ENCODE measurements at regions of chr20 and their contacts with region 1.

Region 1: DNA sequence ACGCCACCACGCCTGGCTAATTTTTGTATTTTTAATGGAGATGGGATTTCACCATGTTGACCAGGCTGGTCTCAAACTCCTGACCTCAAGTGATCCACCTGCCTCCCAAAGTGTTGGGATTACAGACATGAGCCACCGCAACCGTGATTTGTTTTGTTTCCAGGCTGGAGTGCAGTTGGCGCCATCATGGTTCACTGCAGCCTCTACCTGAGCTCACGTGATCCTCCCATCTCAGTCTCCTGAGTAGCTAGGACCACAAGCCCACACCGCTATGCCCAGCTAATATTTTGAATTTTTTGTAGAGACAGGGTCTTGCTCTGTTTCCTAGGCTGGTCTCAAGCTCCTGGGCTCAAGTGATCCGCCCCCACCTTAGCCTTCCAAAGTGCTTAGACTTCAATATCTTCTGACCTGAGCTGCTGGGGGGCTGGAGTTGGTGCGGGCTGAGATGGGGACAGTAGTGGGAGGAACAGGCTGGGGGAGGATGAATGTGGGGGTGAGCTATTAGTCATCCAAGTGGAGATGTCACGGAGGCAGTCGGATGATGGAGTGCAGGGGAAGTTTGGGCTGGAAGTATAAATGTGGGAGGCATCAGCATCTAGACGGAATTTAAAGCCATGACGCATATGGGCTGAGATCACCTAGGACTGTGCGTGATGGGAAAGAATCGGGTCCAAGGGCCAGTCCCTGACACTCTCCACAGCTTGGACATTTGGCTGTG is 23.1 kb upstream of the ZMYND8 start:
- DNase-seq: peak; percentile 58
- H3K4me3 ChIP-seq: no peak overlapping the region
- CTCF ChIP-seq: no peak

Region 2: DNA sequence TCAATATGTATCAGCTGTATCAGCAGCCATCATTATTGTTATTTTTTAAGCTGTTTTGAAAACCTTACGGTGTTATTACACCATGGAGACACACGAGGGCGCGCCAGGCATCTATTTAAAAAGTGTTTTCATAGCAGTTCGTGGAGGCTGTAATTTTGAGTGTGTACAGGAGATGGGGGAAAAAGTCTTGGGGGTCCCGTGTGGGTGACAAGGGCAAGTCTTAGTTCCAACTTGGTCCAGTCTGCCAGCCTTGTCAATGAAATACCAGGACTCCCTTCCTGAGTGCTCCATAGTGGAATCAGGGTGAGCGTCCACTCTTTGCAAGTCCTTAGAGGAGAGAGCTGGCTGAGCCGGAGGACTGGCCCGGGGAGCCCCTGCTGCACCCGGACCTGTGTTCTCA is 626.9 kb before region 1 on chr20:
- CTCF ChIA-PET with region 1: interaction called, 20 read pairs
- POLR2A ChIA-PET with region 1: no interaction called
- DNase-seq: no peak
- H3K4me3 ChIP-seq: peak overlapping the region; percentile 37
- CTCF ChIP-seq: peak; percentile 61

Region 3: DNA sequence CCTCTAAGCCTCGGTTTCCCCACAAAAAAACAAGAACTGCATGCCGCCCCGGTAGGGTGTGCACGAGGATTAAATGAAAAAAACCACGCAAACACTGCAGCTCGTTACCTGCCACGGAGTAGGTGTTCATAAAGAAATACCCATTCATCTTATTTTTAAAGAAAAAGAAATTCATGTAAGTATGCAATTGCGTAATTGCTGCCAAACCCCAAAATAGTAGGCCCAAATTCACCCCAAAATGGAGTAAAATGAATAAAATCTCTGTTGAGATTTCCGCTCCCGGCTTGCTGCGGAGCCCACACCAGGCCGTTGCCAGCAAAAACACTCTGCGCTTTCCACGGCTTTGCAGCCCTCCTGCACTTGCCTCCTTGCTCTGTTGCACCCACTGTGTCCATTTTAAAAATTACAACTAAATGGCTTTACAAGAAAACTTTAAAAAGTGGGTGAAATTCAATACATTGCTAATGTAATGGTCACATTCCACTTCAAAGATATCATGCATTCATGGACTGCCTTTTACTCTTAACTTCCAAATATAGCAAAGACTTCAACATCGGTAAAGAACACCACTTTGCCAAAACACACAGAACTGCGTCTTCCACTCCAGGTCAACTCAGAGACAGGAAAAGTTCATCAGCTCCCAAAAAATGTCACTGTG is 148.1 kb before region 1 on chr20:
- CTCF ChIA-PET with region 1: interaction called, 49 read pairs
- POLR2A ChIA-PET with region 1: no interaction called
- DNase-seq: peak; percentile 83
- H3K4me3 ChIP-seq: no peak overlapping the region
- CTCF ChIP-seq: peak; percentile 28

Region 4: GRCh38 chr20:47272893-47273590 is 106.5 kb before region 1 on chr20:
- CTCF ChIA-PET with region 1: interaction called, 633 read pairs
- POLR2A ChIA-PET with region 1: interaction called, 48 read pairs
- DNase-seq: no peak
- H3K4me3 ChIP-seq: no peak overlapping the region
- CTCF ChIP-seq: peak; percentile 78

Region 5: DNA sequence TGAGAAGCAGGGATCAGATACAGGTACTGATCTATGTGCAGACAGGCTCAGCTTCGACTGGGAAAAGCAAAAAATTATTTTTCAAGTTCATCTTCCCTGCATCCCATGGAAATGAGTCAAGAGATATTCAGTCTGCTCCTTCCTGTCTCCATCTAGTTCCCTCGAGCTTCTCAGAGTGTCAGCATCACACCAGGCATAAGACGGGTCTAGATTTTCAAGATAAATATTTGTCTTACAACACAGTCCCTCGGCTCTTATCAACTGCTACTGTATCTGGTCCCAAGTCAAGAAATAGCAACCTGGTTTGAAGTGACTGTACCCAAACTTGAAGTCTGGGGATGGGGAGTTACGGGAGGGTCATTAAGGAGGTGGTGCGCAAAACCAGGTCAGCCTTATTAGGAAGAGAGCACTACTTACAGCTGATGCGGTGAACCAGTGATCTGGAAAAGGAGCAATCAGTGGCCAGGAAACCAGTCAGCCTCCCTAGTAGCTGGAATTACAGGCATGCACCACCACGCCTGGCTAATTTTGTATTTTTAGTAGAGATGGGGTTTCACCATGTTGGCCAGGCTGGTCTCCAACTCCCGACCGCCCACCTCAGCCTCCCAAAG is 52.8 kb before region 1 on chr20:
- CTCF ChIA-PET with region 1: interaction called, 18 read pairs
- POLR2A ChIA-PET with region 1: no interaction called
- DNase-seq: no peak
- H3K4me3 ChIP-seq: no peak overlapping the region
- CTCF ChIP-seq: no peak

Region 6: GRCh38 chr20:47397652-47398301 is 18.2 kb after region 1 on chr20:
- CTCF ChIA-PET with region 1: interaction called, 19 read pairs
- POLR2A ChIA-PET with region 1: no interaction called
- DNase-seq: no peak
- H3K4me3 ChIP-seq: no peak overlapping the region
- CTCF ChIP-seq: no peak

Region 7: GRCh38 chr20:47445291-47445690 is 65.7 kb after region 1 on chr20:
- CTCF ChIA-PET with region 1: no interaction called
- POLR2A ChIA-PET with region 1: no interaction called
- DNase-seq: no peak
- H3K4me3 ChIP-seq: no peak overlapping the region
- CTCF ChIP-seq: no peak

Region 8: GRCh38 chr20:47720636-47721427 is 341.2 kb after region 1 on chr20:
- CTCF ChIA-PET with region 1: no interaction called
- POLR2A ChIA-PET with region 1: no interaction called
- DNase-seq: peak; percentile 73
- H3K4me3 ChIP-seq: no peak overlapping the region
- CTCF ChIP-seq: no peak

Measured in AG04449 (cell line).